Right ventricle myocardium superior (tissue), 1 donor: ENCODE measurements at regions of chr7 and their contacts with region 1.

Region 1: DNA sequence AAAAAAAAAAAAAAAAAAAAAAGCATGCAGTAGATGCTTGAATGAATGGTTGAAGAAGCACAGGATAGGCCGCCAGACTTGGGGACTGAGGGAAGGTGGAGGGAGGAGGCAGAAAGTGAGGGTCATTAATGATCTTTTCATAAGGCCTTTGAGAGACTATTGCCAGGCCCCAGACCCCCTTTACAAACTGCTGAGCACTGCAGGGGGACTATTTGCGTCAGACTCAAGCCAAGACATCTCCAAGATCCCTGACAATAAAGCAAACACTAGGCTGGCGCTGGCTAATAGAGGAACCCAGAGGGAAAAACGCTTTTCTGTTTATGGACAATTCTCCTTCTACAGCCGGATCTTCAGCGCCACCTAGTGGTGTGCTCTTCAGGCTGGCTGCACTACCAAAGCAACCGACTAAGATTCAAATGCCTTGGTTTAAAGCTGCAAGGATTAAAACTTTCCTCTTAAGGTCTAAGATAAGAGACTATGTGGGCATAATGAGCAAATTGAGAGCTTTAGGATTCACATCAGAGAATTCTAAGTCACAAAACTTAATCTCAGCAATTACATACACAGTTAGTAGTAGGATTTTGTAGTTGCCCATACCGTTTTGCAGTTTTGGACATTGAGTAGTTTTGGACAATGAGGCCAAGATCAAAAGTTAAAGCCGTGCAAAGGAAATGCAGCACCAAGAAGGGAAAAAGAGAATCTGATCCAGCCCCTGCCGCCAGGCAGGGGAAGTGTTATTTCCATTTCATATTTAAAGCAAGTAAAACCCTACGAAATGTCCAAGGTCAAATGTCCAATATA is 17.9 kb upstream of the AGK start:
- DNase-seq: peak; percentile 70
- ATAC-seq: peak; percentile 89

Region 2: DNA sequence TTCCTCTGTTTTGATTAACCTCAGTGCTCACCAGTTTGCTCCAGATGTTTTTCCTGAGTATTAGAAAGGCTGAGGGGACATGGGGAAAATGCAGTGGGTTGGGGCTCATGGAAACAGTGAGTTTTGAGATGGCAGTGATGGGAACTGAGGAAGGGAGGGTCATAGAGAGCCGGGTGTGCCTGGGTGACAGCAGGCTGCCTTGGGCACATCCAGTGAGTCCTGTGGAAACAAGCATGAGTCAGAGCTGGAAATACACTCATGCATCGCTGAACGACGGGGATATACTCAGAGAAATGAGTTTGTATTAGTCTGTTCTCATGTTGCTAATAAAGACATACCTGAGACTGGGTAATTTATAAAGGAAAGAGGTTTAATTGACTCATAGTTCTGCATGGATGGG is 257.3 kb before region 1 on chr7:
- intact Hi-C with region 1: loop called (anchors 10 kb)
- DNase-seq: no peak
- ATAC-seq: no peak

Region 3: GRCh38 chr7:141992156-141992555 is 458.8 kb after region 1 on chr7:
- intact Hi-C with region 1: no loop called
- DNase-seq: no peak
- ATAC-seq: no peak